ENCODE measurements at regions of chr5 and their contacts with region 1.

Region 1: DNA sequence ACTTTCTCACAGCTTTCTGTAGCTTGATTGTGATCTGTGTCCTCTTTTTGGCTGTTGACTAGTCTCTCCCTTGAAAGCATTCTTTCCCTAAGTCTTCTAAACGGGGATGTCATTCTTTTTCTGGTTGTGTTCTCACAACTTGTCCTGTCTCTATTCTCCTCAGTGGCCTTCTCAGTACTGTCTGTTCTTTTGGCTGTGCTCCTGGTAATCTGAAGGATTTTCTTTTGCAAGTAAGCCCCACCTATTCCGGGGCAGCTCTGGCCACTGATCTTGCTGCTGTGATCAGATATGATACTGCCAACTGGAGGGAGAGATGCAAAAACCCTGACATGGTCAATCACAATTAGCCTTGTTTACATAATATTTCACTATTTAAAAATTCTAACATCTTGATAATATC is 172.2 kb downstream of the CDC42SE2 start:
- DNase-seq: no peak
- H3K4me3 ChIP-seq: no peak overlapping the region
- H3K27ac ChIP-seq: no peak overlapping the region
- H3K27me3 ChIP-seq: no peaks in the 10 kb centered on the region
- CTCF ChIP-seq: no peak

Region 2: GRCh38 chr5:131265311-131265803 is 170.7 kb before region 1 on chr5:
- CTCF ChIA-PET with region 1: no interaction called
- POLR2A ChIA-PET with region 1: no interaction called
- DNase-seq: no peak
- H3K4me3 ChIP-seq: peak overlapping the region; percentile 86
- H3K27ac ChIP-seq: no peak overlapping the region
- H3K27me3 ChIP-seq: no peaks in the 10 kb centered on the region
- CTCF ChIP-seq: peak; percentile 46

Region 3: GRCh38 chr5:131423056-131423455 is 13.0 kb before region 1 on chr5:
- CTCF ChIA-PET with region 1: interaction called, 14 read pairs
- POLR2A ChIA-PET with region 1: no interaction called
- DNase-seq: peak; percentile 1
- H3K4me3 ChIP-seq: no peak overlapping the region
- H3K27ac ChIP-seq: no peak overlapping the region
- H3K27me3 ChIP-seq: no peaks in the 10 kb centered on the region
- CTCF ChIP-seq: peak; percentile 65

Measured in AG04450 (cell line).